Activated CD4-positive, alpha-beta memory T cell treated with anti-CD3 and anti-CD28 coated beads for 36 hours (primary cell): ENCODE measurements at regions of chr6 and their contacts with region 1.

Region 1: GRCh38 chr6:131923356-131923755 is 27.8 kb downstream of the CCN2 start:
- DNase-seq: peak; percentile 60
- H3K4me3 Mint-ChIP-seq: no peak overlapping the region
- H3K27ac Mint-ChIP-seq: no peak overlapping the region
- H3K4me1 Mint-ChIP-seq: no peaks in the 10 kb centered on the region
- H3K27me3 Mint-ChIP-seq: peaks cover 5% of the 10 kb centered on the region

Region 2: GRCh38 chr6:131979515-131980337 is 56.4 kb after region 1 on chr6:
- CTCF ChIA-PET with region 1: no interaction called
- POLR2A ChIA-PET with region 1: no interaction called
- intact Hi-C with region 1: no loop called
- DNase-seq: no peak
- H3K4me3 Mint-ChIP-seq: no peak overlapping the region
- H3K27ac Mint-ChIP-seq: no peak overlapping the region
- H3K4me1 Mint-ChIP-seq: no peaks in the 10 kb centered on the region
- H3K27me3 Mint-ChIP-seq: no peaks in the 10 kb centered on the region

Region 3: DNA sequence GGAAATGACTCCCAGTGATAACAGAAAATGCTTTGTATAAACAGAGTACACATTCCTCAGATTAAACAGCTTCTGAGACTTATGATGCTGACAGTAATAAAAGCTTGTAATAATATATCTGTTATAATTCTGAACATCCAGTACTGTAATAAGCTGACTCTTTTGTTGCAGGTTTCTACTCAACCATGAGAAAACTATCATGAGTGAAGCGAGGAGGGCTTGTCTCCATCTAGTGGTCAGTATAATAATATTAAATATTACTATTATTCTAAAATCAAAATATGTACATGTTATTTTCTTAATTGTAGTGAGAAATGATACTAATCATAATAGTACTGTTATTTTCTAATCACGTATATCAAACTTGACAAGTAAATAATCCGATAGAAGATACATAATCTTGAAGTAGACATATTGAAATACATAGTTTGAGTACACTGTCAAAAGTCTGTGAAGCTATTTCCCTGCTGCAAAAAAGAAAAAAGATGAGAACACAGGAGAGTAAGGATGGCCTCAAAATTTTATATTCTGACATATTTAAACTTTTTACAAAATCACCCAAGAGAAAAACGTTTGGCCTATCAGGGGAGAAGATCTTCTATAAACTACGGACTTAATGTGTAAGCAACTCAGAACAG is 294.8 kb after region 1 on chr6:
- CTCF ChIA-PET with region 1: interaction called, 9 read pairs
- POLR2A ChIA-PET with region 1: no interaction called
- intact Hi-C with region 1: loop called (anchors 2 kb)
- DNase-seq: no peak
- H3K4me3 Mint-ChIP-seq: no peak overlapping the region
- H3K27ac Mint-ChIP-seq: no peak overlapping the region
- H3K4me1 Mint-ChIP-seq: no peaks in the 10 kb centered on the region
- H3K27me3 Mint-ChIP-seq: peaks cover 4% of the 10 kb centered on the region